Right ventricle myocardium superior (tissue), 1 donor: ENCODE measurements at regions of chr5 and their contacts with region 1.

Region 1: GRCh38 chr5:149381987-149382340 is 2.9 kb upstream of the IL17B start:
- DNase-seq: peak; percentile 87
- ATAC-seq: peak; percentile 81

Region 2: GRCh38 chr5:149429839-149430721 is 48.1 kb after region 1 on chr5:
- intact Hi-C with region 1: loop called (anchors 2 kb)
- DNase-seq: peak; percentile 76
- ATAC-seq: peak; percentile 9

Region 3: GRCh38 chr5:149561848-149562247 is 179.9 kb after region 1 on chr5:
- intact Hi-C with region 1: loop called (anchors 5 kb)
- DNase-seq: no peak
- ATAC-seq: peak; percentile 89